Ascending aorta (tissue), 2 donors: ENCODE measurements at regions of chr19 and their contacts with region 1.

Region 1: DNA sequence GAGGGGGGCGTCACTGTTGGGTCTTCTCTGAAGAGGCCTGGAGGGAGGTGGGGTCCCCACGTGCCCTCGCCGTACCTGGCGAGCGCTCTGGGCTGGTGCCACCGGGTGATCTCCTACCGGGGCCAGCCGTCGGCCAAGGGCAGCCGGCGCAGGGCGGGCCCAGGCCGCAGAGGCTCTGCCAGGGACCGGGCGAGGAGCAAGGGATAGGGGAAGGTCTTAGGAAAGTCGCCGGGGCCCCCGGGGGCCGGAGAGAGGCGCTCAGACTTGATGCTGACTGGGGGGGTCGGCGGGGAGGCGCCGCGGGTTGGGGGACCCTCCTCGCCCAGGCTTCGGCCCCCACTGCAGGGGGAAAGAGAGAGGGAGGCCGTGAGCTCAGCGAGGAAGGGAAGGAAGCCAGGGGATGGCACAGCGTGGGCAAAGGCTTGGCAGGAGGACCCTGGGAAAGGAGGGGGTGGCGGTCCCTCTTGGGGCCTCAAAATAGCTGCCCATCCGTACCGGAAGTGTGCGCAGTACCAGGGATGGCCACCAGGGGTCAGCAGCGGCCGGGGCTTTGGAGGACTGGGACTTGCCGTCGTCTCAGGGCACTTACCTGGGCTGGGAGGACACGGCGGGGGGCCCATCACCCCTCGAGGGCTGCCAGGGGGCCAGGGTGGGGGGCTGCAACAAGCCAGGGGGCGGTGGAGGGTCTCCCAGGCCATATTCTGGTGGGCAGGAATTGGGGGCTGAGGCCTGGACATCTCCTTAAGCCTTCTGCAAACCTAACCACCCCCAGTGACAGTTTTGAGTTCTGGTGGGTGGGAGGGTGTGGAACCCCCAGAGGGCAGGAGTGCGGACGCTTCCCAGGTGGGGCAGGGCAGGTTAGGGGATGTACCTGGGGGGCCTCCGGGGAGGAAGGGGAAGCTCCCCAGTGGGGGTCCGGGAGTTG is 7.7 kb upstream of the TMEM161A start:
- DNase-seq: peak; percentile 25 to 90
- H3K4me3 ChIP-seq: peak overlapping the region; percentile 28 to 53
- H3K27ac ChIP-seq: no peak overlapping the region
- H3K4me1 ChIP-seq: peaks cover 0 to 4% of the 10 kb centered on the region in 2 donors
- H3K27me3 ChIP-seq: no peaks in the 10 kb centered on the region
- CTCF ChIP-seq: peak; percentile 92 to 100 (median 97)

Region 2: DNA sequence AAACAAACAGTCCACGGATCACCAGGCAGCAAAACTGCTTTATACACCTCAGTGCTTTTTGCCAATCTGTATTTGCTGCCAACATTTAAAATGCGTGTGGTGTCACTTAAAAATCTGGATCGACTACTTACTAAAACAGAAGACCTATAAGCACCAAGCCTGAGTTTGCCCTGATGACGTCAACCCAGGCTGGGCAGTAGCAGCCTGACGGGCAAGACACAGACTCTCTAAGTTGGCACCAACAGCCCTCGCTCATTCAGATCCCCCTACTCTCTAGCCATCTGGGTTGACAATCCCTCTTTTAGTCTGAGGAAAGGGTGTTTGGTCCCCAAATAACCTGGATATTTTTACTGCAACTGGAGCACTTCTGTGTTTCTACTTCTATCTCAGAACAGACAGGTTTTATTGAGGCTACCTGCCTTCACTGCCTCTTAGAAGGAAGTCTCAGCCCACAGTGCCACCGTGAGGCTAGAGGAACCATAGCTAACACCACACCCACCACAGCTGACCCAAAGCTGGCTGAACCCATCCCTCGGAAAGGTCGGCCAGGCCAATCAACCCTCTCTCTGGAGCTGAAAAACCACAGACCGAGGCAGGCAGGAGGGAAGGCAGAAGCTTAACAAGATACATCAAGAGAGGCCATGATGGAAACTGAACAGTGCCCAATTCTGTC is 119.5 kb before region 1 on chr19:
- intact Hi-C with region 1: no loop called
- DNase-seq: no peak
- H3K4me3 ChIP-seq: no peak overlapping the region
- H3K27ac ChIP-seq: no peak overlapping the region
- H3K4me1 ChIP-seq: no peaks in the 10 kb centered on the region
- H3K27me3 ChIP-seq: no peaks in the 10 kb centered on the region
- CTCF ChIP-seq: no peak

Region 3: DNA sequence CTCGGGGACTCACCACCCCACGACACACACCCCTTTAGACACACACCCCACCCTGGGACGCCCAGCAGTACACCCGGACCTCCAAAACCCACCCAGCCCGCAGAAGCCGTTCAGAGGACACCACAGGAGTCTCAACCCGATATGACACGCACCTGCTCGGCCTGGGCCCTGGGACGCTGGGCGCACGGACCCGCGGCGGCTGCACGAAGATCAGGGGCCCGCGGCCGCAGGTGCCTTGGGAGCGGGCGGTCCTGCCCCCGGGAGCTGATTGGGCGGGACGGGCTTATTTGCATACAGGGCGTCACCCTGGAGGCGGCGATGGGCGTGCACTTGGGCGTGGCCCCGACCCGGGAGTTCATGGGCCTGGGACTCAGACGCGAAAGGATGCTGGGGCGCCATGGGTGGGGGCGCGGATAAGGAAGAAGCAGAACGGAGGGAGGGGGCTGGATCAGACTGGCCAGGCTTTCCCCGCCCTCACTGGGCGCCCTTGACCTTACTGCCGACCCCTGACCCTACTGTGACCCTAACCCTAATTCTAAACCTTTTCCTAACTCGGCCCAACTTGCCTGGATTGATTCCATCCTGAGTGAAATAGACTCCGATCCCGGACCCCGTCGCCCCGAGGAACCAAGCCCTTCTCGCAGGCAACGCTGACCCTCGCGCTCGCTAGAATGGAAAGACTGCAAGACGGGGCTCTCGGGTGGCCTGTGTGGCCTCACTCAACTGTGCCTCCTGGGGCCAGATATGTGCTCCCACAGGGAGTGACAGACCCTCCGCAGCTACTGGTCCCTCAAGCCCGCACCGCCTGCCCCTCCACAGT is 24.3 kb after region 1 on chr19 and contains the start of gene MEF2B:
- intact Hi-C with region 1: loop called (anchors 2 kb)
- DNase-seq: peak in 1 of 2 donors; percentile 82
- H3K4me3 ChIP-seq: peak within 1 kb of the TSS; percentile 31 to 36
- H3K27ac ChIP-seq: no peak within 1 kb of the TSS
- H3K4me1 ChIP-seq: peaks cover 0 to 4% of the 10 kb centered on the region in 2 donors
- H3K27me3 ChIP-seq: no peaks in the 10 kb centered on the region
- CTCF ChIP-seq: no peak
- total RNA-seq, gene MEF2B: not detected

Region 4: DNA sequence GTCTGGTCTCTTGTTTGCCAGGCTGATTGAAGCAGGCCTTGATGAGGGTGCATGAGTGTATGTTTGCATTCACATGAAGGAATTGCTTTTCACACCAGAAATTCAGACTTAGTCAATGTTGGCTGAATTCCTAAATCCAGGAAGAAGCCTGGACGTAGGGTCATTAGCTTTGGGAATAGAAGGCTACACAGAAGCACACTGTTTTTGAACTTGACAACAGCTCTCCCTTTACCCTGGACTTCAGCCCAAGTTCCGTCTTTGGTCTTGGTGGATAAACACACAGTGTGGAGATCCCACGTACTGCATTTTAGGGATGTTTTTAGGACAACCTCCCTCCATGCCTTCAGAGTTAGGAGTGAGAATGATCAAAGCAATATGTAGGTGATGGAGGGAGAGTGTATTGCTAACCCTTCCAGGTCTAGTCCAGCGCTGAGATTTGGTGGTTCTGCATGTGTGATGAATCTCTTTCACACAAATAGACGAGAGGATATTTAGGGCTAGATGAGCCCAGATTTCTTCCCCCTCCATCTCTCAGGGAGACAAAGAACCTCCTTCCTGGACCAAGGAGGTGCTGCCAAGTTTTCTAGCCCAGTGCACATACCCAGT is 104.4 kb after region 1 on chr19:
- intact Hi-C with region 1: no loop called
- DNase-seq: no peak
- H3K4me3 ChIP-seq: no peak overlapping the region
- H3K27ac ChIP-seq: no peak overlapping the region
- H3K4me1 ChIP-seq: no peaks in the 10 kb centered on the region
- H3K27me3 ChIP-seq: no peaks in the 10 kb centered on the region
- CTCF ChIP-seq: no peak